Psoas muscle (tissue), 8 donors: ENCODE measurements at regions of chr11 and their contacts with region 1.

Region 1: DNA sequence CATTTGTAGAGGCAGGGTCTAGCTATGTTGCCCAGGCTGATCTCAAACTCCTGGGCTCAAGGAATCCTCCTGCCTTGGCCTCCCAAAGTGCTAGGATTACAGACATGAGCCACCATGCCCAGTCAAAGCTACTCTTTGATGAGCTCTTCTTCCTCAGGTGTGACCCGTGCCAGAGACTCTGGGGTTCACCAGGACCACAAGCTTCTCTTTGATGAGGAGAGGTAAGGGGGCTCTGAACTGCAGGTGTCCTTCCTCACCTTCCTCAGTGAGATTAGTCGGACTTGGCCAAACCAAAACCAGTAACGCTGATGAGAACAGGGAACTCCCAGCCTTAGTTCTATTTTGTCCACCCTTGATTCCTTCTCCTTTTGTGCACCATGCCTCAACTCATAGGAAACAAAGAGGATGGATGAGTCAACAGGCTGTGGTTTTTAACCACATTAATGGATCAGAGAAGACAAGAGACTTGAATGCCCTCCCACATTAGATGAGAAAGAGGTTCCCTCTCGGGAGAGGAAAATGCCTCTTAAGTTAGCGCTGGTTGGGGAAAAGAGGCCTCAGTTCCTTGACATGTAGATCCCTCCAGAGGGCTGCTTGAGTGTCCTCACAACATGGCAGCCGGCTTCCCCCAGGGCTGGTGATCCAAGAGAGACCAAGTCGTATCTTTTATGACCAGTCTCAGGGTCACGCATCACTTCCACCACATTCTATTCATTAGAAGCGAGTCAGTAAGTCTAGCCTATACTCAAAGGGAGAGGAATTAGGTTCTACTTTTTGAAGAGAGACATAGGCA is 25.7 kb upstream of the CTR9 start:
- DNase-seq: no peak
- ATAC-seq: no peak
- H3K4me3 ChIP-seq: no peak overlapping the region
- H3K27ac ChIP-seq: no peak overlapping the region
- H3K4me1 ChIP-seq: no peaks in the 10 kb centered on the region
- H3K27me3 ChIP-seq: no peaks in the 10 kb centered on the region
- CTCF ChIP-seq: no peak

Region 2: GRCh38 chr11:10564696-10565318 is 160.5 kb before region 1 on chr11:
- intact Hi-C with region 1: loop called in 1 of 2 experiments (anchors 5 kb)
- DNase-seq: no peak
- ATAC-seq: peak in 1 of 4 donors; percentile 45
- H3K4me3 ChIP-seq: peak overlapping the region; percentile 26
- H3K27ac ChIP-seq: no peak overlapping the region
- H3K4me1 ChIP-seq: peaks cover 6% of the 10 kb centered on the region
- H3K27me3 ChIP-seq: no peaks in the 10 kb centered on the region
- CTCF ChIP-seq: peak; percentile 48

Region 3: GRCh38 chr11:10674911-10675440 is 50.3 kb before region 1 on chr11:
- intact Hi-C with region 1: loop called in 1 of 2 experiments (anchors 5 kb)
- DNase-seq: peak; percentile 70 to 89
- ATAC-seq: peak; percentile 94 to 98 (median 96)
- H3K4me3 ChIP-seq: peak overlapping the region; percentile 57
- H3K27ac ChIP-seq: peak overlapping the region; percentile 90
- H3K4me1 ChIP-seq: peaks cover 30% of the 10 kb centered on the region
- H3K27me3 ChIP-seq: no peaks in the 10 kb centered on the region
- CTCF ChIP-seq: no peak

Region 4: GRCh38 chr11:10824888-10825287 is 99.6 kb after region 1 on chr11:
- intact Hi-C with region 1: no loop called
- DNase-seq: no peak
- ATAC-seq: no peak
- H3K4me3 ChIP-seq: no peak overlapping the region
- H3K27ac ChIP-seq: no peak overlapping the region
- H3K4me1 ChIP-seq: no peaks in the 10 kb centered on the region
- H3K27me3 ChIP-seq: no peaks in the 10 kb centered on the region
- CTCF ChIP-seq: no peak